CD8-positive, alpha-beta T cell (primary cell): ENCODE measurements at regions of chr5 and their contacts with region 1.

Region 1: GRCh38 chr5:142699184-142699720 is 13.4 kb upstream of the FGF1 start:
- DNase-seq: peak; percentile 53 to 83 (median 74)
- ATAC-seq: peak; percentile 91
- H3K4me3 ChIP-seq: no peak overlapping the region
- H3K4me3 Mint-ChIP-seq: no peak overlapping the region
- H3K27ac ChIP-seq: no peak overlapping the region
- H3K27ac Mint-ChIP-seq: no peak overlapping the region
- H3K4me1 ChIP-seq: no peaks in the 10 kb centered on the region
- H3K4me1 Mint-ChIP-seq: no peaks in the 10 kb centered on the region
- H3K27me3 ChIP-seq: no peaks in the 10 kb centered on the region
- H3K27me3 Mint-ChIP-seq: no peaks in the 10 kb centered on the region
- CTCF ChIP-seq: peak; percentile 84

Region 2: GRCh38 chr5:141992349-141992963 is 706.8 kb before region 1 on chr5:
- CTCF ChIA-PET with region 1: interaction called, 3 read pairs
- POLR2A ChIA-PET with region 1: no interaction called
- intact Hi-C with region 1: loop called in 1 of 2 experiments (anchors 1 kb)
- DNase-seq: peak; percentile 59 to 87 (median 81)
- ATAC-seq: peak; percentile 87
- H3K4me3 ChIP-seq: no peak overlapping the region
- H3K4me3 Mint-ChIP-seq: no peak overlapping the region
- H3K27ac ChIP-seq: no peak overlapping the region
- H3K27ac Mint-ChIP-seq: no peak overlapping the region
- H3K4me1 ChIP-seq: no peaks in the 10 kb centered on the region
- H3K4me1 Mint-ChIP-seq: peaks cover 5% of the 10 kb centered on the region
- H3K27me3 ChIP-seq: no peaks in the 10 kb centered on the region
- H3K27me3 Mint-ChIP-seq: no peaks in the 10 kb centered on the region
- CTCF ChIP-seq: peak; percentile 97

Region 3: GRCh38 chr5:142151436-142152383 is 547.5 kb before region 1 on chr5:
- CTCF ChIA-PET with region 1: interaction called, 17 read pairs
- POLR2A ChIA-PET with region 1: no interaction called
- intact Hi-C with region 1: loop called (anchors 1 kb)
- DNase-seq: peak in 7 of 9 experiments; percentile 20 to 80 (median 55)
- ATAC-seq: peak; percentile 70
- H3K4me3 ChIP-seq: no peak overlapping the region
- H3K4me3 Mint-ChIP-seq: no peak overlapping the region
- H3K27ac ChIP-seq: no peak overlapping the region
- H3K27ac Mint-ChIP-seq: no peak overlapping the region
- H3K4me1 ChIP-seq: no peaks in the 10 kb centered on the region
- H3K4me1 Mint-ChIP-seq: peaks cover 11% of the 10 kb centered on the region
- H3K27me3 ChIP-seq: no peaks in the 10 kb centered on the region
- H3K27me3 Mint-ChIP-seq: no peaks in the 10 kb centered on the region
- CTCF ChIP-seq: peak; percentile 84

Region 4: DNA sequence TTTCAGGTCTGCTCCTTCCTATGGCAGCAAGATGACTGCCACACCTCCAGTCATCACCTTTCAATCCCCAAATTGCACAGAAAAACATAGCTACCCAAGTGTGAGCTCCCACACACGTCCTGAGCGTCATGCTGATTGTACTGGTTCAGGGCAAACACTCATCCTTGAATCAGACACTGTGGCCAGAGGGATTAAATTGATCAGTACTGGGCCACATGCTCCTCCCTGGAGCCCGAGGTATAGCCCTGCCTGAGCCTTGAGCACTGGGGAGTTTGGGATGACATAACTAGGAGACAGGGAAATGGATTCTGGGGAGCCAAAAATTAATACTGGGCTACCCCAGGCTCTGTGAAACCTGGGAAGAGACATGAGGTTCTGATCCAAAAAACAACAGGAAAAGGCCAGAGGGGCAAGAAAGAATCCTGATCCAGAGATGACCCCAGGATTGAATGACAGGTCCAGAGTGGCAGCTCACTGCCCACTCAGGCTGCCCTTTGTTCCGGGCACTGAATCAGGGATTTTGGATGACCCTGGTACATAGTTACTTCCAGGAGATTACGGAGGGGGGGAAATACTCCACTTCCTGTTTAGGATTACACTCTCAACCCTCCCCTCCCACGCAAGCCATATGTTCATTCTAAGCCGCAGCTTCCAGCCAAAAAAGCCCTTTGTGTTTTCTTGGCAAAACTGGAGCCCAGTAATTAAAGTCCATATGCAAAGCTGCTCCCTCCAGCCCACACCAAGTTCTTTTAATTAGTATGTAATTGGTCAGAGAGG is 232.9 kb before region 1 on chr5:
- CTCF ChIA-PET with region 1: no interaction called
- POLR2A ChIA-PET with region 1: no interaction called
- intact Hi-C with region 1: no loop called
- DNase-seq: no peak
- ATAC-seq: no peak
- H3K4me3 ChIP-seq: no peak overlapping the region
- H3K4me3 Mint-ChIP-seq: no peak overlapping the region
- H3K27ac ChIP-seq: no peak overlapping the region
- H3K27ac Mint-ChIP-seq: no peak overlapping the region
- H3K4me1 ChIP-seq: no peaks in the 10 kb centered on the region
- H3K4me1 Mint-ChIP-seq: no peaks in the 10 kb centered on the region
- H3K27me3 ChIP-seq: no peaks in the 10 kb centered on the region
- H3K27me3 Mint-ChIP-seq: no peaks in the 10 kb centered on the region
- CTCF ChIP-seq: no peak

Region 5: GRCh38 chr5:142655339-142656267 is 43.6 kb before region 1 on chr5:
- CTCF ChIA-PET with region 1: interaction called, 56 read pairs
- POLR2A ChIA-PET with region 1: no interaction called
- intact Hi-C with region 1: loop called (anchors 1 kb)
- DNase-seq: peak; percentile 36 to 79 (median 69)
- ATAC-seq: peak; percentile 89
- H3K4me3 ChIP-seq: no peak overlapping the region
- H3K4me3 Mint-ChIP-seq: no peak overlapping the region
- H3K27ac ChIP-seq: no peak overlapping the region
- H3K27ac Mint-ChIP-seq: no peak overlapping the region
- H3K4me1 ChIP-seq: no peaks in the 10 kb centered on the region
- H3K4me1 Mint-ChIP-seq: peaks cover 3% of the 10 kb centered on the region
- H3K27me3 ChIP-seq: no peaks in the 10 kb centered on the region
- H3K27me3 Mint-ChIP-seq: peaks cover 16% of the 10 kb centered on the region
- CTCF ChIP-seq: peak; percentile 97

Region 6: DNA sequence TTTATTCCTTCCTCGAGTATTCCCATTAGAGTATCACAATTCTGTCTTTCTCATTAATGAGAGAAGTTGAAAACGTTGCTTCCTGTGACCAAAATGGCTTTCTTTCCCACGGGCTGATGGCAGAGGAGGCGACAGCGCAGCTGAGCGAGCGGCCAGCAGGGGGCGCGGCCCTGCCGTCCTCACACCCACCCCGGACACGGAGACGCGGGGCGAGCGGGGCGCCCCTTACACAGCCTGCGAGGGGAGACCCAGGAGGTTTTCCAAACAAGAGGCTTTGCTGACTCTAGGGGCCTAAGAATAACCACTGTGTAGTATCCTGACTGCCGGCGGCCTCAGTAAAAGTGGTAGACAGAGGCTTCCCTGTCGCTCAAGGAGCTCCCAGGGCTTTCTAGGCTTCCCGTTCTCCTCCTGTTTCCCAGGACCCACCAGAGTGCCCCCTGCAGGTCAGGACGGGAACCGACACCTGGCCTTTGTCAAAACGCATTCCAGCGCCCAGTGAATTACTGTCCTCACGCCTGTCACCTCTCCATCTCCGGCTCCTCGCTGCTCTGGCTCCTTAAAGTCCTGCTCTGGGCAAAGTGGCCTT is 14.0 kb after region 1 on chr5:
- CTCF ChIA-PET with region 1: interaction called, 58 read pairs
- POLR2A ChIA-PET with region 1: no interaction called
- intact Hi-C with region 1: no loop called
- DNase-seq: peak; percentile 70 to 93 (median 83)
- ATAC-seq: peak; percentile 95
- H3K4me3 ChIP-seq: peak overlapping the region; percentile 61 to 82
- H3K4me3 Mint-ChIP-seq: peak overlapping the region; percentile 76
- H3K27ac ChIP-seq: peak overlapping the region in 1 of 2 experiments; percentile 49
- H3K27ac Mint-ChIP-seq: peak overlapping the region; percentile 45
- H3K4me1 ChIP-seq: peaks cover 4% of the 10 kb centered on the region
- H3K4me1 Mint-ChIP-seq: peaks cover 18% of the 10 kb centered on the region
- H3K27me3 ChIP-seq: no peaks in the 10 kb centered on the region
- H3K27me3 Mint-ChIP-seq: no peaks in the 10 kb centered on the region
- CTCF ChIP-seq: peak; percentile 98

Region 7: DNA sequence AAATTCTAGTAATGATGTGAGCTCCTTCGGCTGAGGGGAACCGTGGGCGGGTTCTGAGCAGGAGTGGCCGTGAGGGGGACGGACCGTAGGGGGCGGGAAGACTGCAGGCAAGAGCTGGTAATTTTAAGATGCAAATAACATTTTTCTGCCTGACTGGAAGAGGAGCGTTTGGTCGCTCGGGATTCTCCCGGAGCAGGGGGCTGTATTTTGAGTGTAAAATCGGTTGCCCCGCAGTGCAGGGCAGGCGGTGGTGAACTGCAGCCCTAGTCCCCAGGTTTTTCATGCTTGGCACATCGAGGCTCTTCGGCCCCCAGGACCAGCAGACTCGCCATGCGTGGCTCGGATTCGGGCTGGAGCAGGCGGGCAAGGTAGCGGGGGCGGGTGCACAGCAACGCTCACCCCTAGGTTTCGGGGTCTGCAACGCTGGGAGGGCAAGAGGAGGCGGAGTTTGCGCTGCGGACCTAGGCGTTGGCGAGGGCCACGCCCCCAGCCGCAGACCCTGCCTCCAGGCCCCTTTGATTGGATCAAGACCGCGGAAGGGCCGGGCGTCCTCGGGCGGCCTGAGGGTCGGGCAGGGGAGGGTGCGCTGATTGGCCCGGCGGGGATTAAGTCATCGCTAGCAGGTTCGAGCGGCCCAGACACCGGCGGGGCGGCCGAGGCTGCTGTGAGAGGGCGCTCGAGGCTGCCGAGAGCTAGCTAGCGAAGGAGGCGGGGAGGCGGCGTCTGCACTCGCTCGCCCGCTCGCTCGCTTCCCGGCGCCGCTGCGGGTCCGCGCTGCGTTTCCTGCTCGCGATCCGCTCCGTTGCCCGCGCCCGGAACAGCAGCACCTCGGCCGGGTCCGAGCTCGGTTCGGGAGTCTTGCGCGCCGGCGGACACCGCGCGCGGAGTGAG is 70.7 kb after region 1 on chr5 and contains the start of gene ARHGAP26:
- CTCF ChIA-PET with region 1: no interaction called
- POLR2A ChIA-PET with region 1: no interaction called
- intact Hi-C with region 1: no loop called
- DNase-seq: peak; percentile 87 to 97 (median 92)
- ATAC-seq: peak; percentile 85
- H3K4me3 ChIP-seq: peak within 1 kb of the TSS; percentile 96 to 98
- H3K4me3 Mint-ChIP-seq: peak within 1 kb of the TSS; percentile 95
- H3K27ac ChIP-seq: peak within 1 kb of the TSS; percentile 74 to 78
- H3K27ac Mint-ChIP-seq: peak within 1 kb of the TSS; percentile 93
- H3K4me1 ChIP-seq: peaks cover 27% of the 10 kb centered on the region
- H3K4me1 Mint-ChIP-seq: peaks cover 45% of the 10 kb centered on the region
- H3K27me3 ChIP-seq: no peaks in the 10 kb centered on the region
- H3K27me3 Mint-ChIP-seq: no peaks in the 10 kb centered on the region
- CTCF ChIP-seq: no peak
- total RNA-seq, gene ARHGAP26: 46.0 to 46.6 TPM